Activated CD8-positive, alpha-beta T cell treated with anti-CD3 and anti-CD28 coated beads, Interleukin-2, amount 10 ng/mL, durations not matched to agents 7 days and 5 days (primary cell): ENCODE measurements at regions of chr16 and their contacts with region 1.

Region 1: GRCh38 chr16:14249291-14250032 is 178.3 kb downstream of the MRTFB start:
- DNase-seq: peak; percentile 67
- ATAC-seq: no peak
- H3K4me3 Mint-ChIP-seq: no peak overlapping the region
- H3K27ac Mint-ChIP-seq: no peak overlapping the region
- H3K4me1 Mint-ChIP-seq: no peaks in the 10 kb centered on the region
- H3K27me3 Mint-ChIP-seq: no peaks in the 10 kb centered on the region

Region 2: DNA sequence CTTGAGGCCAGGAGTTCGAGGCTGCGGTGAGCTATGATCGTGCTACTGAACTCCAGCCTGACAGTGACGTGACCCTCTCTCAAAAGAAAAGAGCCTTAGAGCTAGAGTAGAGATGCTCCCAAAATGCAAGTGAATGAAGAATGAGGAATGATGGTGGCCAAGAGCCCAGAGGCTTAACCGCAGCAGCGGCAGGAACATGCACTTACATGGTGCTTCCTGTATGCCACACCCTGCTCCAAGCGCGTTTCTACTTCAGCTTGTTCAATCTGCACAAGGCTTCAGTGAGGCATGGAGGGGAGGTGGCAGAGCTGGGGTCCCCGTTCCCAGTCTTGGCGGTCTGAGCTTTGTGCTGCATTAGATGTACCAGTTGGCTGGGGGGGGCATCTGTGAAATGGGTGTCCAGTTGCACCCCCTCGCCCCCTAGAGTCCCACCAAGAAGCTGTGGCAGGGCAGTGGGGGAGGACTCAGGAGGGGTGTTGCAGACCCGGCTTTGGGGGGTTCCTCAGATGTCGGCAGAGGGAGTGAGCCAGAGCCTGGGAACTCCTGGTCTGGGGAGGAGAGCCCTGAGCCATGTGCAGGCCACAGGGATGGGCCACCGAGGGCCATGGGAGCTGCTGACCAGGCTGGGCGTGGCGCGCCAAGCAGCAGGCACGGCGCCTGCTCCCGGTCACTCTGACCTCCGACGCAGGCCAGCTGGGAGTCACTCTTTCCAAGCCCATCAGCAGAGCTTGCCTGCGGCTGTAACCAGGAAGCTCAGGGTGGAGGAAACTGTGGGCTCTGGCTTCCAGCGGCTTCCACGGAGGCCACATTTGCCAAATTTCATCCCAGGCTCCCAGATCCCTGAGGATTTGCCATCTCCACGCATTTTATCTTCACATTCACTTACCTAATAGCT is 120.5 kb after region 1 on chr16:
- CTCF ChIA-PET with region 1: no interaction called
- POLR2A ChIA-PET with region 1: no interaction called
- DNase-seq: no peak
- ATAC-seq: no peak
- H3K4me3 Mint-ChIP-seq: no peak overlapping the region
- H3K27ac Mint-ChIP-seq: no peak overlapping the region
- H3K4me1 Mint-ChIP-seq: no peaks in the 10 kb centered on the region
- H3K27me3 Mint-ChIP-seq: no peaks in the 10 kb centered on the region

Region 3: GRCh38 chr16:14529010-14529669 is 279.7 kb after region 1 on chr16:
- CTCF ChIA-PET with region 1: interaction called, 10 read pairs
- POLR2A ChIA-PET with region 1: no interaction called
- DNase-seq: peak; percentile 69
- ATAC-seq: peak; percentile 33
- H3K4me3 Mint-ChIP-seq: no peak overlapping the region
- H3K27ac Mint-ChIP-seq: no peak overlapping the region
- H3K4me1 Mint-ChIP-seq: no peaks in the 10 kb centered on the region
- H3K27me3 Mint-ChIP-seq: no peaks in the 10 kb centered on the region